ENCODE measurements at regions of chr3 and their contacts with region 1.

Region 1: DNA sequence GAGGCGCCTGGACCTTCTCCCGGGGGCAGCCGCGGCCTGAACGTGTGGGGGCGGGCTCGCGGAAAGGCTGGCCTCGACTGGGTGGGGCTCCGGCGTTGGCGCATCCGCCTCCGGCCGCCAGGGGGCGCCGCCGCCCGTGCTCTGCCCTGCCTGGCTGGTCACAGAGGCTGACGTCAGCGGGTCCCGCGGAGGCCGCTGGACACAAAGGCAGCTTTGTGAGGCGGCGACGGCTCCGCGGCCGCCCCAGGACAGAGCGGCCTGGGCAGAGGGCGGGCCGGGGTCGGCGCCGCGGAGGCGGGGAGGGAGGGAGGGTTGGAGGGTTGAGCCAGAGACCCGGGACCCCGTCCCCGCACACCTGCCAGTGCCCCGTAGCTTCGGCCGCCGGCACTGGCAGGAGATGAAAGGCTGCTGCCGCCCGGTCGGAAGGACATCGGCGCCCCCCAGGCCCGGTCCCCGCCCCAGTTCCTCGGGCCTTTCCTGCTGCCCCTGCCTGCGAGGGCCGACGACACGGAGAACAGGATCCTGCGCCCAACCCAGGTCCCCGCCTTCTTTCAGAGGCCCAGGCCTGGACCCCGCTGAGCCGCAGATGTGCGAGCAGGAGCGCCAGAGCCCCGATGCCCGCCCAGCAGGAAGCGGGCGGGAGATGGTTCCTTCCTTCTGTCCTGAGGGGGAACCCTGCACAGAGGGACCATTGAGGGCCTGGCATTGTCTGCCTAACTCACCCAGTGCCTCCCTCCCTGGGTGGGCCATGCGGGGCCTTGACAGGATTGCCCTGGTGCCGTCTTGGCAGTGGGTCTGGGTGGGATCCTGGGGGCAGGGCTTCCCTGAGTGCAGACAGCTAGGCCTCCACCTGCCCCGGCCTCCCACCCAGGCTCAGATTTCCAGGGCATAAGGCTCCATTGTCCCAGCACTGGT is 8.7 kb upstream of the SEMA3B start:
- DNase-seq: peak in 1 of 2 experiments; percentile 97
- H3K4me3 ChIP-seq: peak overlapping the region; percentile 11 to 60 (median 34)
- H3K27ac ChIP-seq: peak overlapping the region; percentile 89
- H3K4me1 ChIP-seq: peaks cover 0 to 27% (median 22%) of the 10 kb centered on the region in 4 experiments; a peak in 6 of 7 replicates
- H3K27me3 ChIP-seq: no peaks in the 10 kb centered on the region
- CTCF ChIP-seq: peak in 2 of 3 experiments; percentile 93 to 96; a peak in 3 of 4 replicates
- EP300 ChIP-seq: peak in 1 of 2 experiments; percentile 9; a peak in 1 of 3 replicates
- POLR2A ChIP-seq: peak in 1 of 2 experiments; percentile 84; a peak in 2 of 3 replicates
- RAD21 ChIP-seq: peak; percentile 79 to 90

Region 2: GRCh38 chr3:50227390-50228183 is 32.7 kb before region 1 on chr3:
- CTCF ChIA-PET with region 1: interaction called, 2,149 read pairs
- POLR2A ChIA-PET with region 1: interaction called, 12 read pairs
- DNase-seq: peak; percentile 89 to 94
- H3K4me3 ChIP-seq: peak overlapping the region; percentile 51 to 88 (median 73)
- H3K27ac ChIP-seq: peak overlapping the region; percentile 86
- H3K4me1 ChIP-seq: peaks cover 0 to 18% (median 6%) of the 10 kb centered on the region in 4 experiments; a peak in 6 of 7 replicates
- H3K27me3 ChIP-seq: peaks cover 0 to 3% (median 2%) of the 10 kb centered on the region in 4 experiments; a peak in 4 of 7 replicates
- CTCF ChIP-seq: peak in 2 of 3 experiments; percentile 67 to 97; a peak in 3 of 4 replicates
- EP300 ChIP-seq: no peak; a peak in 1 of 3 replicates
- POLR2A ChIP-seq: peak in 1 of 2 experiments; percentile 53; a peak in 2 of 3 replicates
- RAD21 ChIP-seq: peak; percentile 90 to 95

Region 3: DNA sequence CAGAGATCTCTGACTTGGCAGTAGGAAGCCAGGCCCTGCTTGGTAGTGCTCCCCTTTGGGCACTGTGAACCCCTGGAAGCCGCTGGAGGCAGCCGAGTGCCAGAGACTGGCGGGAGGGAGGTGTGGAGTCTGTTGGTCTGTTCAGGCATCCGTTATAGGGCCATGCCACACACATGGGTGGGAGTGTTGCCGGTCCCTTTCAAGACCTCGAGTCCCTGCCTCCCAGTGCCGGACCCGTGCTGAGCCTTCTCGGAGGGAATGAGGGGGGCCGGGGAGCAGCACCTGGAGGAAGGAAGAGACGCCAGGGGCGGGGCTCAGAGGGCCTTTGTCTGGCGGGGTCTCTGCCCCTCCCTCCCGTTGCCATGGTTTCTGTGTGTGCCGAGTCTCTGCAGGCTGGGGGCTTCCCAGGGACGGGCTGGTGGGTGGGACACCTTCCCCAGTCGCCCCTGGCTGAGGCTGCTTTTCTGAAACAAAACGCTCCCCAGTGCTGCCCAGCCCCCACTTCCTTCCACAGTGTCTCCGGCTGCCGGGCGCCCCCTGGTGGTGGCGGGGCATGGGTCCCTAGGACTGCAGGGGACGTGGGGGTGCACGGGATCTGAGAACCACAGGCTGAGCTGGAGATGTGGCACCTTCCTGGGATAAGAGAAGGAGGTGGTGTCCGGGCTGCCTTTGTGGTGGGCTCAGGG is 14.3 kb before region 1 on chr3:
- CTCF ChIA-PET with region 1: interaction called, 2,149 read pairs
- POLR2A ChIA-PET with region 1: interaction called, 17 read pairs
- DNase-seq: peak in 1 of 2 experiments; percentile 99
- H3K4me3 ChIP-seq: peak overlapping the region in 2 of 4 experiments; percentile 23 to 27; a peak in 4 of 8 replicates
- H3K27ac ChIP-seq: peak overlapping the region; percentile 53
- H3K4me1 ChIP-seq: peaks cover 5 to 48% (median 41%) of the 10 kb centered on the region in 4 experiments
- H3K27me3 ChIP-seq: no peaks in the 10 kb centered on the region
- CTCF ChIP-seq: peak in 2 of 3 experiments; percentile 91 to 97; a peak in 3 of 4 replicates
- EP300 ChIP-seq: peak in 1 of 2 experiments; percentile 69; a peak in 1 of 3 replicates
- POLR2A ChIP-seq: no peak; a peak in 1 of 3 replicates
- RAD21 ChIP-seq: peak; percentile 75 to 91

Region 4: GRCh38 chr3:50278868-50279224 is 18.6 kb after region 1 on chr3 and contains the start of gene LSMEM2:
- CTCF ChIA-PET with region 1: interaction called, 149 read pairs
- POLR2A ChIA-PET with region 1: interaction called, 22 read pairs
- DNase-seq: no peak
- H3K4me3 ChIP-seq: no peak within 1 kb of the TSS
- H3K27ac ChIP-seq: no peak within 1 kb of the TSS
- H3K4me1 ChIP-seq: peaks cover 0 to 12% (median 7%) of the 10 kb centered on the region in 4 experiments; a peak in 5 of 7 replicates
- H3K27me3 ChIP-seq: peaks cover 20 to 41% (median 34%) of the 10 kb centered on the region in 4 experiments
- CTCF ChIP-seq: no peak
- EP300 ChIP-seq: no peak
- POLR2A ChIP-seq: no peak
- RAD21 ChIP-seq: no peak
- total RNA-seq, gene LSMEM2: 0.57 and 0.58 TPM in 2 replicates

Region 5: GRCh38 chr3:50321336-50322114 is 61.2 kb after region 1 on chr3:
- CTCF ChIA-PET with region 1: interaction called, 16 read pairs
- POLR2A ChIA-PET with region 1: interaction called, 7 read pairs
- DNase-seq: peak; percentile 75 to 93
- H3K4me3 ChIP-seq: peak overlapping the region; percentile 89 to 96 (median 94)
- H3K27ac ChIP-seq: peak overlapping the region; percentile 100
- H3K4me1 ChIP-seq: peaks cover 0 to 35% (median 19%) of the 10 kb centered on the region in 4 experiments; a peak in 6 of 7 replicates
- H3K27me3 ChIP-seq: no peaks in the 10 kb centered on the region
- CTCF ChIP-seq: peak in 2 of 3 experiments; percentile 69 to 71; a peak in 3 of 4 replicates
- EP300 ChIP-seq: peak in 1 of 2 experiments; percentile 97; a peak in 2 of 3 replicates
- POLR2A ChIP-seq: peak in 1 of 2 experiments; percentile 97; a peak in 2 of 3 replicates
- RAD21 ChIP-seq: 0 out of 4 replicates have a peak, but pooled peaks of 1 of the 2 experiments have one; percentile 20